Dendritic cell treated with granulocyte-macrophage colony-stimulating factor and Interleukin-4, amounts not matched to agents 40 ng/mL and 50 ng/mL, for 4 days (primary cell): ENCODE measurements at regions of chr20 and their contacts with region 1.

Region 1: DNA sequence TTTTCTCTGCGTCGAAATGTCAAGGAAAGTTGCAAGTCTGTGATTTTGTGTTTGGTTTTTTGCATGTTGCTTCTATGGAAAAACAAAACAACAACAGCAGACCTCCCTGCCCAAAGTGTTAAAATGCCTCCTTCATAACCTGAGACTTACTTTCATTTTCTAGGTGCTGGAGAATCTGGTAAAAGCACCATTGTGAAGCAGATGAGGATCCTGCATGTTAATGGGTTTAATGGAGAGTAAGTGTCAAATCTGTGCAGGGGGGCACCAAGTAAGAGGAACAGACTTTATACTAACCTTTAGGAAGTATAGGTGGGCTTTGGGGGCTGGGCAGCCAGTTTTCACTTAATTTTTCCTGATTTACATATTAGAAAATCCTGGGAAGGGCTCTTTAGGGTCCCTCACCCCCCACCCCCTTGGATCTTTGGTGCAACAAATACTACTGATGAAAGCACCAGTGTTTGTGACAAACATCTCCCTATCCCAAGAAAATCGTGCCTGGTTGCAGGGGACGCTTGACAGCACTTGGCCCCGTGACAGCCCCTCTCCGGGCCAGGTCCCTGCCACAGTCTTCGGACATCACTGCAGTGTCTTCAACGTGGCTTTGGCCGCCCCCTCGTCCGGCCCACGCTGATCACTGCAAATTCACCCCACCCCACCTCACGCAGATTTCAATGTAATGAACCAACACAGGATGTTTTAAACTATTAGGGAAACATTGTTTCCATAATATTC is 43.1 kb downstream of the GNAS start:
- H3K4me3 Mint-ChIP-seq: no peak overlapping the region
- H3K27ac Mint-ChIP-seq: no peak overlapping the region
- H3K4me1 Mint-ChIP-seq: peaks cover 65% of the 10 kb centered on the region
- H3K27me3 Mint-ChIP-seq: no peaks in the 10 kb centered on the region

Region 2: GRCh38 chr20:58921564-58921963 is 25.9 kb after region 1 on chr20:
- intact Hi-C with region 1: no loop called
- H3K4me3 Mint-ChIP-seq: no peak overlapping the region
- H3K27ac Mint-ChIP-seq: no peak overlapping the region
- H3K4me1 Mint-ChIP-seq: peaks cover 10% of the 10 kb centered on the region
- H3K27me3 Mint-ChIP-seq: peaks cover 2% of the 10 kb centered on the region

Region 3: DNA sequence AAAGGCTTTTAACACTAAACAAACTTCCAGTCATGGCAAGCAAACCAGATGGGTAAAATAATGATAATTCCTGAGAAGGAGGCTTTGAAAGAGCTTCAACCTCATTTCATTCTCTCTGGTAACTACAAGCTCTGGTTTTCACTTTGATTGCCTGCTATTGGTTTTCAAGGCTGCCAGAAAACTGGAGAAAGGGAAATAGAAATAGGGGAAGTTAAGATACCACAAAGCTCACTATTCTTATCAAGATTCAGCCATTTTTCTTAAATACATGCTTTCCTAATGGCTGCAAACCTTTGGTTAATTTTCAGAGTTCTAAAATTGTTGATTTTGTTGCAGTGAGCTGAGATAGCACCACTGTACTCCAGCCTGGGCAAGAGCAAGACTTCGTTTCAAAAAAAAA is 42.9 kb after region 1 on chr20:
- intact Hi-C with region 1: no loop called
- H3K4me3 Mint-ChIP-seq: no peak overlapping the region
- H3K27ac Mint-ChIP-seq: no peak overlapping the region
- H3K4me1 Mint-ChIP-seq: peaks cover 9% of the 10 kb centered on the region
- H3K27me3 Mint-ChIP-seq: peaks cover 5% of the 10 kb centered on the region

Region 4: DNA sequence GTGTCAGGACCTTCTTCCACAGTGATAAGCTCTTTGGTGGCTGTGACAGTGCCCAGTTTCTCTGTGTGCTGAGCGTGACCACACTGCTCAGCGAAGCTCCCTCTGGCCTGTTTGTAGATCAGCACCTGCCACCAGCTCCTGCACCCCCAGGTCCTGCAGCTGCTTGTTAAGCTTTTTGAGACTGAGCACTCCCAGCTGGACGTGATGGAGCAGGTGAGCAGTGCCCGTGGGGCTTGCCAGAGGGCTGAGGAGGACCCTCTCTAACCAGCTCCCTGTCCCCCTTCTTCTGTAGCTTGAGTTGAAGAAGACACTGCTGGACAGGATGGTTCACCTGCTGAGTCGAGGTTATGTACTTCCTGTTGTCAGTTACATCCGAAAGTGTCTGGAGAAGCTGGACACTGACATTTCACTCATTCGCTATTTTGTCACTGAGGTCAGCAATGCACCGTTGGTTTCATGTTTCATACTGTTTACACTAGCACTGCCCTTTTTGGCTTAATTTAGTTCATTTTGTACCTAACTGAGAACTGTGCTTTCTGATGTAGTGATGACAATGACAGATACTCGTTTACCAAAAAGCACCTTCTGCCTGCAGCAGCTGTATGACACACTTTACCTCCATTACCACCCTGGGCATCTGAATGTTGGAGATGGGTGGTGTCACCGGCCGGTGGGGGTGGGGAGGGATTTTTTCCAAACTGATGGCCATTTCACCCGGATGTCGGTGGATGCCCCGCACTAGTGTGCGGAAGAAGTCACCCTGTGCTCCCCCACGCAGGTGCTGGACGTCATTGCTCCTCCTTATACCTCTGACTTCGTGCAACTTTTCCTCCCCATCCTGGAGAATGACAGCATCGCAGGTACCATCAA is 98.0 kb after region 1 on chr20:
- intact Hi-C with region 1: loop called (anchors 5 kb)
- H3K4me3 Mint-ChIP-seq: no peak overlapping the region
- H3K27ac Mint-ChIP-seq: peak overlapping the region; percentile 41
- H3K4me1 Mint-ChIP-seq: peaks cover 31% of the 10 kb centered on the region
- H3K27me3 Mint-ChIP-seq: no peaks in the 10 kb centered on the region

Region 5: GRCh38 chr20:59195316-59195993 is 299.8 kb after region 1 on chr20:
- intact Hi-C with region 1: no loop called
- H3K4me3 Mint-ChIP-seq: no peak overlapping the region
- H3K27ac Mint-ChIP-seq: no peak overlapping the region
- H3K4me1 Mint-ChIP-seq: no peaks in the 10 kb centered on the region
- H3K27me3 Mint-ChIP-seq: peaks cover 8% of the 10 kb centered on the region